ENCODE measurements at regions of chr3 and their contacts with region 1.

Region 1: DNA sequence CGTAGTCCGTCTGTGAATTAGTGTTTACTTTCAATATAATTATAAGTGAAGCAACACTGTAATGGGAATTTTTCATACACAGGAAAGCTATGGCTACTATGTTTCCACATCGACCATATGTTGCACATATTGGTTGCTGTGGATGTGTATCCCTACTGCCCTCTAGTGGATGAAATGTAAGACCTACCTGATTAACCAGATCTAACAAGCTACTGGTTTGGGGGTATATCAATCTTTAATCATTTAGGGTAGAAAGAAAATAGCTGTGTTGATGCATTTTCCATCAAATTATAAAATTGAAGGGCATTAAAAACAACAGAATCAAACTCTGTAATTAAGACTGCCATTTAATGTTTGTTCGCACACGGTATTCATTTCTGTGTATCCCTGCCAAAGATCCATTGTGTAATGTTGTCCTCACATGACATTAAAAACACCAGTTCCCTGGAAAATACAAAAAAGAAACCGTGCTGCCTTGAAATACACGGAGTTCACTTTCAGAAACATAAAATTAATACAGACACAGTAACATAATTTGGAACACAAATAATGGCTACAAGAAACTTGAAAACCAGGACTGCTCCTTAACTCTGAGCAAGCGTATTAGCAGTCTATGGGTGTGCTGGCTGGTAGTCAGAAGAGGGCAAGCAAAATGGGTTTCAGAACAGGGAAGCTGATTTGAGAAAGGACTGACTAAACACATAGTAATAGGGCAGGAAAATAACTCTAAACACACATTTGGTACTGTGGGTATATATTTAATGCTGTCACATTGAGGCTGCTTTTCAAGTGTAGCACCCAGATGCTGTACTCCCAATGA is 125.1 kb downstream of the TIGIT start:
- DNase-seq: peak in 5 of 35 experiments; percentile 1 to 80 (median 9)
- ATAC-seq: peak; percentile 82 to 88 (median 83)
- H3K4me3 ChIP-seq: no peak overlapping the region
- H3K4me3 Mint-ChIP-seq: no peak overlapping the region
- H3K27ac ChIP-seq: no peak overlapping the region
- H3K27ac Mint-ChIP-seq: no peak overlapping the region
- H3K4me1 ChIP-seq: no peaks in the 10 kb centered on the region
- H3K4me1 Mint-ChIP-seq: peaks cover 6 to 11% (median 10%) of the 10 kb centered on the region in 3 donors
- H3K27me3 ChIP-seq: no peaks in the 10 kb centered on the region
- H3K27me3 Mint-ChIP-seq: no peaks in the 10 kb centered on the region

Region 2: DNA sequence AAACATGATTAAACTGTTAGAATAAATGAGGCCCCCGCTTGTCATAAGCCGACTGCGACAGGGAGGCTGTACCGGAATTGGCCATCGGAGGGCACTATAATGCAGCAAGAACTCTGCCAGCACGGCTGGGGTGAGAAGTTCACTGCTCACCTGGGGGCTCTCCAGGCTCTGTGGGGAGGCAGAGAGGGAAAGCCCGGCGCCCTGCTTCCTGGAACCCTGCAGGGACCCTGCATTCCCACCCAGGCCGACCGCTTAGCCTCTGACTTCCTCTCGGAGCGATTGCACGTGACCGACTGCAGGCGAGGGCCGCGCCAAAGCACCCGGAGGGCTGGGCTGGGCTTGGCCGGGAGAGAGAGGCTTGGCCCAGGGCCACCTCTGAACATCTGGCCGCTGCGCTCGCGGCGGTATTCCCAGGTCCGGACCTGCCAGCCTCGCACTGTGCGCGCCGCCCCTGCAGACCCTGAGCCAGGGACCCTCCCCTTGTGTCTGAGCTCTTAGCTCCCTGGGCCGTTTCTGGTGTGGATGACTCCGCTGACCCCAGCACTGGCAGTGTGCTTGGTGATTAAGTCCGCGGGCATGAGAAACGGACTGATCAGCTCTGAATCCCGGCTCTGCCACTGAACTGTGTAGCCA is 266.3 kb before region 1 on chr3:
- CTCF ChIA-PET with region 1: interaction called, 14 to 20 read pairs
- POLR2A ChIA-PET with region 1: no interaction called
- DNase-seq: peak; percentile 64 to 89 (median 80)
- ATAC-seq: peak; percentile 88 to 94 (median 92)
- H3K4me3 ChIP-seq: peak overlapping the region; percentile 41 to 55
- H3K4me3 Mint-ChIP-seq: peak overlapping the region; percentile 56 to 58 (median 57)
- H3K27ac ChIP-seq: peak overlapping the region; percentile 25
- H3K27ac Mint-ChIP-seq: peak overlapping the region; percentile 7 to 29
- H3K4me1 ChIP-seq: peaks cover 0 to 7% of the 10 kb centered on the region in 2 experiments
- H3K4me1 Mint-ChIP-seq: peaks cover 5 to 13% (median 10%) of the 10 kb centered on the region in 3 donors
- H3K27me3 ChIP-seq: no peaks in the 10 kb centered on the region
- H3K27me3 Mint-ChIP-seq: no peaks in the 10 kb centered on the region

Region 3: DNA sequence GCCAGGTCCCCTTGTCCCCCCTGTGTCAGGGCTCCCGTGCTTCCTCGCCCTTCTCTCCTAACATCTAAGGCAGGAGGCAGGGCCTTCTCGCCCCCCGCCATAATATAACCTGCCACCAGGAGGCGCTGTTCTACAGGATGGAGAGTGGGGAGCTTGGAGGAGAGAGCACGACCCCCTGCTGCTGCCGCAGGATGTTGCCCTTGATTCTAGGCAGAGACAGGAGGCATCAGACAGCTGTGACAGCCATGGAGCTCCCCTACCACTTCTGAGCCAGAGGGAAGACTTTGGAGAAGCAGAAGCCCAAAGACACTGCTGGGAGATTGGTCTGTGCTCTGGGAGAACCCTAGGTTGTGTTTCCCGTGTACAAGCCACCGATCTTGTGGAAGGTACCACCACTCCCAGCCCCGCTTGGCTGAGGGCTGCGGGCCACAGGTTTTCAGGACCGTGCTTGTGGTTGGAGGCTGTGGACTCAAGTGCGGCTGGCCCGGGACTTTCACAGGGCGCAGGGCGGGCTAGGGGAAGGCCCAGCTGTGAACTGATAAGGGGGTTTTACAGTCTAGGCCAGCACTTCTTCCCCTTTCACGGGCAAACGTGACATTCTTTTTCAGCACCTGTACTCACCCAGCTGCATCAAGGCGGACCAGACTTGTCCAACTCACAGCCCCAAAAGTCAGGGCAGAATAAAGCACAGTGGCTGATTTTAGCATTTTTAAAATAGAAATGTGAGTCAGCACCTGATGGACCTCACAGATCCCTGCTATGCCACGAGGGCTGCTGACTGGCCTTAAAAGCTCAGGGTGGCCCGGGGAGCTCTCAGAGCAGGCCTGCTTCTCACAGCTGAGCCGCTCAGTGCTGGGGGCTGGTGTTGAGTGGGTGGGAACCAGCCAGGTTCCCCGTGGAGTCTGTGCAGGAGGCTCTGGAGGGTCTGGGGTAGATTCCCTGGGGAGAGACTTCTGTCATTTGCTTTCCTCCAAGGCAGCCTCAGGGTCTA is 127.7 kb before region 1 on chr3:
- CTCF ChIA-PET with region 1: interaction called, 5 to 10 read pairs
- POLR2A ChIA-PET with region 1: no interaction called
- DNase-seq: peak; percentile 73 to 93 (median 89)
- ATAC-seq: peak; percentile 76 to 85 (median 81)
- H3K4me3 ChIP-seq: peak overlapping the region in 1 of 2 donors; percentile 37
- H3K4me3 Mint-ChIP-seq: peak overlapping the region; percentile 64 to 83 (median 78)
- H3K27ac ChIP-seq: peak overlapping the region; percentile 95
- H3K27ac Mint-ChIP-seq: peak overlapping the region; percentile 94
- H3K4me1 ChIP-seq: peaks cover 0 to 53% of the 10 kb centered on the region in 2 experiments
- H3K4me1 Mint-ChIP-seq: peaks cover 20 to 62% (median 52%) of the 10 kb centered on the region in 3 donors
- H3K27me3 ChIP-seq: no peaks in the 10 kb centered on the region
- H3K27me3 Mint-ChIP-seq: no peaks in the 10 kb centered on the region

Region 4: DNA sequence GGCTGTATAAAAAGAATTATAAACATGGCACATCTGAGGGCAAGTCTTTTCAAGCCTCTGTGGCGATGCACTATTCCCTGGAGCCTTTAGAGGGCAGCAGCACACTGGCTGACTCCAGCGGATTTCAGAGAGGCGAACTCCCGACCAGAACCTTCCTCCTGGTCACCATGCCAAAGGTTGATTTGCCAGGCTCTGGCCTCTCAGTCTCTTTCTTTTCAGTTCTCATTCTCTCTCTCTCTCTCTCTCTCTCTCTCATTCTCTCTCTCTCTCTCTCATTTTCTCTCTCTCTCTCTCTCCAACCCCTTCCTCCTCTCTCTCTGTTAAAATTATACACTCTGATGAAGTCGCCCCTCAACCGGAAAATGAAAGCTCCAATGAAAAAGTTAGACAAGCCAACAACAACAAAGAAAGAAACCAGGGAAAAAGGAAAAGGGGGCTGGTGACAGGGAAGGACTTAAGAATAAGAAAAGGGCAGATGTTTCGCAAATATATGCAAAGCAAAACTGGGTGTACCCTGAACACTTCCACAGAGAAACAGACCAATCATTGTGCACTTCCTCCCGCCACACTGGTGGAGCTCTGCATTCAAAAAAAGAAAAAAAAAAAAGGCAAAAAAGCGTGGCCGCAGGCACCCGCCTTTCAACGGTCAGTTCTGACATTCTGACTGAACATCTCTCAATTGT is 34.9 kb before region 1 on chr3:
- CTCF ChIA-PET with region 1: interaction called, 6 to 51 read pairs
- POLR2A ChIA-PET with region 1: no interaction called
- DNase-seq: peak; percentile 10 to 75 (median 49)
- ATAC-seq: peak; percentile 84 to 85 (median 84)
- H3K4me3 ChIP-seq: peak overlapping the region; percentile 15 to 45
- H3K4me3 Mint-ChIP-seq: peak overlapping the region in 1 of 3 donors; percentile 68
- H3K27ac ChIP-seq: no peak overlapping the region
- H3K27ac Mint-ChIP-seq: peak overlapping the region in 1 of 2 donors; percentile 21
- H3K4me1 ChIP-seq: peaks cover 0 to 12% of the 10 kb centered on the region in 2 experiments
- H3K4me1 Mint-ChIP-seq: peaks cover 9 to 11% (median 10%) of the 10 kb centered on the region in 3 donors
- H3K27me3 ChIP-seq: no peaks in the 10 kb centered on the region
- H3K27me3 Mint-ChIP-seq: no peaks in the 10 kb centered on the region

Region 5: DNA sequence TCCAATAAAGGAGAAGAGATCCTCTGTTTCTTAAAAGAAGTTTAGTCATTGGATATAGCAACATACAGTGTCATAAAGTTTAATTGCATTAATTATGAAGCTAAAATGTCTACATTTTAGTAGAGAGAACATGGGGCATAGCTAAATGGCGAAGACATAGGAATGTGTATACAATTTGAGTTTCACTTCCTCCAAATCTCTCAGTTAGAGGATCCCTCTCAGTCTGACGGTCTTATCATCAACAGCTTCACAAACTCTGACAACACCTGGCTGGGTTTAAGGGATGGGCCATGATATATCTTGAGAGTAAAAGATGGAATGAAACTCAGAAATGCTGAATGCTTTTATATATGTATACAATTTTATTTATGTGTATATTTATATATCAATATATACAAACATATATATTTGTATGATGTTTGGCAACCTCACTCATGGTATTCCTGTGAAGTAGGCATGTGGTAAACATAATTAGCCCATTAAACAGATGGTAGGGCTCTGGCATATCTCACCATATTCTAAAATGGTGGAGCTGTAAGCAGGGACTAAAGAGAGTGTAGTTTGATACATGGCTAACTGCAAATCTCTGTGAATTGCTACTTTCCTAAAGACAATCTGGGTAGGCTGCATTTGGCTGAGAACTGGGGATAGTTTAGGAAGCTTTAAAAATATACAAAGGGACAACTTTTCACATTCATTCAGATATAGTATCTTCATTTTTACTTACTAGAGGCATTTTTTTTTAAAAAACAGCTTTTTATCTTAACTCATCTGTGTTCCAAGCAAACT is 13.5 kb before region 1 on chr3:
- CTCF ChIA-PET with region 1: interaction called, 5 to 14 read pairs
- POLR2A ChIA-PET with region 1: no interaction called
- DNase-seq: no peak
- ATAC-seq: no peak
- H3K4me3 ChIP-seq: no peak overlapping the region
- H3K4me3 Mint-ChIP-seq: no peak overlapping the region
- H3K27ac ChIP-seq: no peak overlapping the region
- H3K27ac Mint-ChIP-seq: no peak overlapping the region
- H3K4me1 ChIP-seq: no peaks in the 10 kb centered on the region
- H3K4me1 Mint-ChIP-seq: peaks cover 0 to 8% (median 0%) of the 10 kb centered on the region in 3 donors
- H3K27me3 ChIP-seq: no peaks in the 10 kb centered on the region
- H3K27me3 Mint-ChIP-seq: no peaks in the 10 kb centered on the region

Measured in T-cell (primary cell).